GM12878 (cell line): ENCODE measurements at regions of chr5 and their contacts with region 1.

Region 1: DNA sequence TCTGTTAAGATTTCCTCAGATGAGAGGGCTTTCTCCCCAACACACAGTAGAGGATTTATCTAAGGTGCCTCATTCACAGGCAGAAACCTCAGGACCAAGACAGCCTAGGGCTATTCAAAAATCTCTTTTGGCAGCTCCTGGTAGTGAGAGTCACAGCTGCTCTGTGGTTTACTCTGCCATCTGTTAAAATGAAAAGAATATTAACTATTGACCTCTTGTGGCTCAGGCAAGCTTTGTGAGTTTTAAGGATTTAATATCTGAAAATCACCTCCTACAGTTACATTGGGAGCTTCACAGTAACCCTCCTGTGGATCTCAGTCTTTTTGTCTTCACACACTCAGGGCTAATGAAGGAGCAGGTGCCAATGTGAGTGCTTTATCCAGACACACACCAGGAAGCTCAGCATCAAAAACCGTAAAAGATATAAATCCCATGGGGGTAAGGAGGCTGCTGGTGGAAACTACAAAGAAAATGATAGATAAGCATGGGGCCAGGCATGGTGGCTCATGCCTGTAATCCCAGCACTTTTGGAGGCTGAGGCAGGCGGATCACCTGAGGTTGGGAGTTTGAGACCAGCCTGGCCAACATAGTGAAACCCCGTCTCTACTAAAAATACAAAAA is 29.7 kb downstream of the PPP1R2B start:
- DNase-seq: peak; percentile 39
- ATAC-seq: peak; percentile 85
- H3K4me3 ChIP-seq: no peak overlapping the region
- H3K27ac ChIP-seq: no peak overlapping the region
- H3K4me1 ChIP-seq: peaks cover 3% of the 10 kb centered on the region; the same call in 1 of the 2 replicates
- H3K27me3 ChIP-seq: no peaks in the 10 kb centered on the region
- CTCF ChIP-seq: no peak
- EP300 ChIP-seq: no peak
- POLR2A ChIP-seq: no peak
- RAD21 ChIP-seq: no peak

Region 2: DNA sequence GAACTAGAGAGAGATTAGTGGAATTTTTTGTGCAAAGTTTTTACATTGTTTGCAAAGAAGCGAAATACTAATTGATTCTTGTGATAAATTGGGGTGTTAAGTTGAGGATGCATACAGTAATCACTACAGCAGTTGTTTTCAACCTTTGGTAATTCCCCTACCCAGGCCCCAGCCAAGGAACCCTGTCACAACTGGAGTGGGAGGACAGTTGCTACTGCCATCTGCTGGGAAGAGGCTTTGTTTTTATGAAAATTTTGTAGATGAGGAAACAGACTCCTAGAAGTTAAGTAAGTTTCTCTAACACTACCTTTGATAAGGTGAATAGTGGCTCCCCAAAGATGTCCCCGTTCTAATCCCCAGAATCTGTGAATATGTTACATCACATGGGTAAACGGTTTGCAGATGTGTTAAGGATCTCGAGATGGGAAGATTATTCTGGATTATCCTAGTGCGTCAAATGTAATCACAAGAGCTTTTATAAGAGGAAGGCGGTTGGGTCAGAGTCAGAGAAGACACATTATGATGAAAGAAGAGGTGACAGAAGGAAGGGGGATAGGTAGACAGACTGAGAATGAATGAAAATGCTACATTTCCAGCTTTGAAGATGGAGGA is 63.7 kb before region 1 on chr5:
- CTCF ChIA-PET with region 1: interaction called, 3 read pairs
- POLR2A ChIA-PET with region 1: no interaction called
- RAD21 ChIA-PET with region 1: interaction called, 11 read pairs
- SMC1A ChIA-PET with region 1: interaction called, 4 read pairs
- in situ Hi-C with region 1: no loop called
- intact Hi-C with region 1: no loop called
- DNase-seq: no peak
- ATAC-seq: peak; percentile 79
- H3K4me3 ChIP-seq: no peak overlapping the region
- H3K27ac ChIP-seq: no peak overlapping the region
- H3K4me1 ChIP-seq: peaks cover 7% of the 10 kb centered on the region; the same call in 1 of the 2 replicates
- H3K27me3 ChIP-seq: no peaks in the 10 kb centered on the region
- CTCF ChIP-seq: peak; percentile 50 to 71 (median 53)
- EP300 ChIP-seq: no peak
- POLR2A ChIP-seq: no peak
- RAD21 ChIP-seq: peak; percentile 85

Region 3: DNA sequence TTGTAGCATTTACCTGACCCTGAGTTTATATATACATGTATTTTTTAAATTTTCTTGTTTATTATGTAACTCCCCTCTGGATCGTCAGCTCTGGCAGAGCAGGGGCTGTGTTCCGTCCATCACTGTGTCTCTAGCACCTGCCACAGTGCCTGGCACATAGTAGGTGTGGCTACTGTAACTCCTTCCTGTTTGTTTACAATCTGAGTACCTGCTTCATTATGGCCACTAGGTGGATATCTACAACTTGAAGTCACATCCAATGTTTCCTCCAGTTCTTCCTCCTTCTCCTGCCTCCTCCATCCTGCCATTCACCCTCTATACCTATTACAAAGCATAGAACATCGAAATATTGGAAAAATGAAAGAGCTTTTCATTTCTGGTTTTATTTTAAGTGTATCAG is 43.9 kb before region 1 on chr5:
- CTCF ChIA-PET with region 1: interaction called, 32 read pairs
- POLR2A ChIA-PET with region 1: no interaction called
- RAD21 ChIA-PET with region 1: interaction called, 4 read pairs
- SMC1A ChIA-PET with region 1: interaction called, 11 read pairs
- in situ Hi-C with region 1: no loop called
- intact Hi-C with region 1: loop called (anchors 5 kb)
- DNase-seq: no peak
- ATAC-seq: peak; percentile 88
- H3K4me3 ChIP-seq: no peak overlapping the region
- H3K27ac ChIP-seq: no peak overlapping the region
- H3K4me1 ChIP-seq: no peaks in the 10 kb centered on the region; the same call in 1 of the 2 replicates
- H3K27me3 ChIP-seq: no peaks in the 10 kb centered on the region
- CTCF ChIP-seq: peak; percentile 32 to 47 (median 39); a peak in 5 of 6 replicates
- EP300 ChIP-seq: no peak
- POLR2A ChIP-seq: no peak
- RAD21 ChIP-seq: peak; percentile 43

Region 4: GRCh38 chr5:156865427-156865826 is 14.3 kb before region 1 on chr5:
- CTCF ChIA-PET with region 1: interaction called, 5 read pairs
- POLR2A ChIA-PET with region 1: no interaction called
- RAD21 ChIA-PET with region 1: interaction called, 3 read pairs
- SMC1A ChIA-PET with region 1: interaction called, 24 read pairs
- in situ Hi-C with region 1: no loop called
- intact Hi-C with region 1: no loop called
- DNase-seq: no peak
- ATAC-seq: no peak
- H3K4me3 ChIP-seq: no peak overlapping the region
- H3K27ac ChIP-seq: no peak overlapping the region
- H3K4me1 ChIP-seq: no peaks in the 10 kb centered on the region
- H3K27me3 ChIP-seq: no peaks in the 10 kb centered on the region
- CTCF ChIP-seq: no peak
- EP300 ChIP-seq: no peak
- POLR2A ChIP-seq: no peak
- RAD21 ChIP-seq: no peak

Region 5: DNA sequence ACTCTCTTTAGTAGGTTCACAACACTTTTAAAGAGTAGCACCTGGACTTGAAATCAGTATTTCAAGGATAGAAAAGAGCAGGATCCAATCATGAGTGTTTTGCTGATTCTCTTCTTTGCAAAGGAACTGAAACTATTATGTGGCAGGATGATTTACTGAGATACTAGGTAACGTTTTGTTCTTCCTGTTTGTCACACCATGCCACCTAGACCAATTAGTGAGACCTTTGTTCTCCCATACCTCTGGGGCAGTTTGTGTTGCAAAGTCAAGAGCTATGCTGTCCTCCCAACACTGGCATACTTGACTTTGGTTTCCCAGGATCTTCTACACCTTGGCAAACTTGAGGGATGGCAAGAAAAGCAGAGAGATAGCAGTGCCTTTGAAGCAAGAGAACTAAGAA is 13.7 kb after region 1 on chr5:
- CTCF ChIA-PET with region 1: interaction called, 10 read pairs
- POLR2A ChIA-PET with region 1: interaction called, 11 read pairs
- RAD21 ChIA-PET with region 1: interaction called, 15 read pairs
- SMC1A ChIA-PET with region 1: interaction called, 23 read pairs
- in situ Hi-C with region 1: no loop called
- intact Hi-C with region 1: no loop called
- DNase-seq: peak; percentile 52
- ATAC-seq: peak; percentile 82
- H3K4me3 ChIP-seq: no peak overlapping the region
- H3K27ac ChIP-seq: peak overlapping the region; percentile 47; the same call in 1 of the 2 replicates
- H3K4me1 ChIP-seq: peaks cover 23% of the 10 kb centered on the region
- H3K27me3 ChIP-seq: no peaks in the 10 kb centered on the region
- CTCF ChIP-seq: no peak
- EP300 ChIP-seq: peak in 1 of 2 experiments; percentile 51; a peak in 1 of 4 replicates
- POLR2A ChIP-seq: no peak
- RAD21 ChIP-seq: no peak

Region 6: DNA sequence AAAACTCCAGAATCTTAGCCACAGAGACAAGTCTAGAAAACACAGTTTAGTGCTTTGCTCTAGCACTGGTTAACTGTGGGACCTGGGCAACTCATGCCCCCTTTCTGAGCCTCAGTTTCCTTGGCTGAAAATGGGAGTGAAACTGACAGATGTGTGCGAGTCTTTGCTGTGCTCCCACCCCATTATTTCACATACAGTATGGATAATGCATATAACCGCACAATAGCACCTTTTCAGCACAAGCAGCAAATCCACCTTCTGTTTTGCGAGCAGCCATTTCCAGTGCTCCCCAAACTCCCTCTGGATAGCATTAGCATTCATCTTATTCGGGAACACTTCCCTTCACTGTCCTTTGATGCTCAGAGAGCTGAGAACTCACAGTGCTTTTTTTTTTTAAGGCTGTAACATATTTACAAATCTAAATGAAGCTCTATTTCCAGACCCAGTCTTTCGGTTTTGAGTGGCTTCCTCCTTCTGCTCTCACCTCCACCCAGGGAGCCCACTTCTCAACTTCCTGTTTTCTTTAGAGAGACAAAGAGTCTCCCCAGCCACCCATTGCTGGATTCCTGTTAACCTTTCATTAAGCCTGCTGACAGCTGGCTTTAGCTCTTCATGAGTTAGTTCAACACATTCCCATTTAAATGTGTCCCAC is 34.1 kb after region 1 on chr5:
- CTCF ChIA-PET with region 1: no interaction called
- POLR2A ChIA-PET with region 1: interaction called, 5 read pairs
- RAD21 ChIA-PET with region 1: interaction called, 50 read pairs
- SMC1A ChIA-PET with region 1: interaction called, 68 read pairs
- in situ Hi-C with region 1: no loop called
- intact Hi-C with region 1: no loop called
- DNase-seq: peak; percentile 68
- ATAC-seq: peak; percentile 87
- H3K4me3 ChIP-seq: peak overlapping the region; percentile 46; the same call in 1 of the 2 replicates
- H3K27ac ChIP-seq: peak overlapping the region; percentile 89
- H3K4me1 ChIP-seq: peaks cover 17% of the 10 kb centered on the region
- H3K27me3 ChIP-seq: no peaks in the 10 kb centered on the region
- CTCF ChIP-seq: no peak
- EP300 ChIP-seq: no peak
- POLR2A ChIP-seq: no peak
- RAD21 ChIP-seq: no peak